Transverse colon (tissue), 4 donors: ENCODE measurements at regions of chr12 and their contacts with region 1.

Region 1: DNA sequence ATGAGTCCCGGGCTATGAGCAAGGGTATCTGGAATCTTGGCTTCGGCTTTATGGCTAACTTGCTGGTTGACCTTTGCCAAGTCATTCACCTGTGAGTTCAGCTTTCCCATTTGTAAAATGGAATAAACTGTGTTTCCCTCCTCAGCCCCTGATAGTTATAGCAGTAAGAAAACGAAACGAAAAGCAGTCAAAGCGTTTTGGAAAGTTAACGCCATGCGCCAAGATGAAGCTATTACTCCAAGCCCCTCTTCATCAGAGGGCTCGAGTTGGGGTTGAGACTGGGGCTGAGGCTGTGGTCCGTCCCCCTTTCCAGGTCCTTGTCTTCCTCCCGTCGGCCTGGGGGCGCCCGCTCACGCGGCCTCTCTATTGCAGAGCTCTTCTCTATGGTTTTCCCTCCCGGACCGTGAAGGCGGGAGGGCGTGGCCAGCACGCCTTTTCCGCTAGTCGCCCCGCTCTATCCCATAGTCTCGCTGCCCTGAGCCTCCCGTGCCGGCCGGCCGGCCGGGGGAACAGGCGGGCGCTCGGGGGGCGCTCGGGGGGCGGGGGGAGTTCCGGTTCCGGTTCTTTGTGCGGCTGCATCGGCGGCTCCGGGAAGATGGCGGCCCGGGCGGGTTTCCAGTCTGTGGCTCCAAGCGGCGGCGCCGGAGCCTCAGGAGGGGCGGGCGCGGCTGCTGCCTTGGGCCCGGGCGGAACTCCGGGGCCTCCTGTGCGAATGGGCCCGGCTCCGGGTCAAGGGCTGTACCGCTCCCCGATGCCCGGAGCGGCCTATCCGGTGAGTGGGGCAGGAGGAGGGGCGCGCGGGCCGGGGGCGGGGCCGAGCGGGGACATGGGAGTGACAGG is at the start of gene SMARCD1:
- DNase-seq: peak; percentile 92
- H3K4me3 ChIP-seq: peak within 1 kb of the TSS; percentile 88 to 98 (median 92)
- H3K27ac ChIP-seq: peak within 1 kb of the TSS; percentile 95 to 99 (median 97)
- H3K4me1 ChIP-seq: peaks cover 0 to 31% (median 10%) of the 10 kb centered on the region in 4 donors
- H3K27me3 ChIP-seq: no peaks in the 10 kb centered on the region
- CTCF ChIP-seq: peak in 2 of 5 experiments; percentile 23 to 44
- EP300 ChIP-seq: peak; percentile 23
- POLR2A ChIP-seq: peak; percentile 26
- total RNA-seq, gene SMARCD1: 23.7 to 52.4 (median 40.4) TPM

Region 2: GRCh38 chr12:48814262-48815125 is 1270.5 kb before region 1 on chr12:
- in situ Hi-C with region 1: no loop called
- intact Hi-C with region 1: loop called (anchors 10 kb)
- DNase-seq: peak; percentile 93
- H3K4me3 ChIP-seq: peak overlapping the region; percentile 42 to 83 (median 62)
- H3K27ac ChIP-seq: peak overlapping the region; percentile 89 to 94 (median 92)
- H3K4me1 ChIP-seq: peaks cover 11 to 60% (median 43%) of the 10 kb centered on the region in 4 donors
- H3K27me3 ChIP-seq: no peaks in the 10 kb centered on the region
- CTCF ChIP-seq: peak; percentile 98 to 100 (median 100)
- EP300 ChIP-seq: no peak
- POLR2A ChIP-seq: no peak

Region 3: DNA sequence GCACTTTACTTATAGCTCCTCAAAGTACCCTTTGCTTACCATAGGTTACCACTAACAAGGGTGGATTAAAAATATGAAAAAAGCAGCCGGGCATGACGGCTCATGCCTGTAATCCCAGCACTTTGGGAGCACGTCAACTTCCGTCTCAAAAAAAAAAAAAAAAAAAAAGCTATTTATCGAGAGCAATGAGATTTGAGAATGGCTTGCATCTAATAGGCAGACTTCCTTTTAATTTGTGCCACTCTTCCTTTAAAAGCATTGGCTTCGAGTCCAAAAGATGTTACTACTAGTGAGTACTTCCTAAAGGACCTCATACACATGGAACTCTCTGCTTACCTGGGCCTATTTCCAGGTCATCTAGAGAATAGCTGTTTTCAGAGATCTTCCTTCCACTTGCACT is 120.7 kb after region 1 on chr12:
- in situ Hi-C with region 1: no loop called
- intact Hi-C with region 1: no loop called
- DNase-seq: no peak
- H3K4me3 ChIP-seq: no peak overlapping the region
- H3K27ac ChIP-seq: no peak overlapping the region
- H3K4me1 ChIP-seq: peaks cover 0 to 26% (median 10%) of the 10 kb centered on the region in 4 donors
- H3K27me3 ChIP-seq: no peaks in the 10 kb centered on the region
- CTCF ChIP-seq: no peak
- EP300 ChIP-seq: no peak
- POLR2A ChIP-seq: no peak

Region 4: DNA sequence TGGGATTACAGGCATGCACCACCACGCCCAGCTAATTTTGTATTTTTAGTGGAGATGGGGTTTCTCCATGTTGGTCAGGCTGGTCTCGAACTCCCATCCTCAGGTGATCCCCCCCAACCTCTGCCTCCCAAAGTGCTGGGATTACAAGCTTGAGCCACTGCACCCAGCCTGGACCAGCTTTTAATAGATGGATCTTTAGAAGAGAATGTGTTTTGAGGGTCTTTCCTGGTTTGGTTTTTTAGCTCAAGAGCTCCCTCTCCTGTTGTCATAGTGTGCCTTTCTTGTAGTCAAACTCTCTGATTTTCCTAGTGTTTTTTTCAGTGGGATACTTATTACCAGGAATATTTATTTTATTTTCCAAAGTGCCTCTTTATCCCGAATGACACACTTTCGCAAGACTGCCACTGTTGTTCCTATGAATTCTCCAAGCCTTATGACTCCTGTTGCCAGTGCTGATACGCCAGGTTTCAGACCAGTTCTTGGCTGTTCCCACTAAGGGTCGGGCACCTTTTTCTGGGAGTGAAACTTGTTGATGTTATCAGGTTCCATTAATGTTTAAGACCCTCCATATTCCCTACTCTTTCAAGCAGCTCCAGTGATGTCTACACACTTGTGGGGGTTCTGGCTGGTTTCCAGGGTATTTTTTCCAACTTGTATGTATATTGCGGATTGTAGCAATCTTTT is 229.8 kb after region 1 on chr12:
- in situ Hi-C with region 1: loop called in 3 of 4 experiments (anchors 25 kb)
- intact Hi-C with region 1: no loop called
- DNase-seq: no peak
- H3K4me3 ChIP-seq: no peak overlapping the region
- H3K27ac ChIP-seq: peak overlapping the region in 1 of 4 donors; percentile 6
- H3K4me1 ChIP-seq: peaks cover 0 to 22% (median 9%) of the 10 kb centered on the region in 4 donors
- H3K27me3 ChIP-seq: no peaks in the 10 kb centered on the region
- CTCF ChIP-seq: peak; percentile 41 to 52 (median 48)
- EP300 ChIP-seq: no peak
- POLR2A ChIP-seq: no peak